ENCODE measurements at regions of chr1 and their contacts with region 1.

Region 1: GRCh38 chr1:61561666-61562065 is 163.3 kb downstream of the TM2D1 start:
- DNase-seq: no peak
- ATAC-seq: no peak
- H3K4me3 ChIP-seq: no peak overlapping the region
- H3K27ac ChIP-seq: no peak overlapping the region
- H3K4me1 ChIP-seq: no peaks in the 10 kb centered on the region
- H3K27me3 ChIP-seq: no peaks in the 10 kb centered on the region
- CTCF ChIP-seq: no peak

Region 2: DNA sequence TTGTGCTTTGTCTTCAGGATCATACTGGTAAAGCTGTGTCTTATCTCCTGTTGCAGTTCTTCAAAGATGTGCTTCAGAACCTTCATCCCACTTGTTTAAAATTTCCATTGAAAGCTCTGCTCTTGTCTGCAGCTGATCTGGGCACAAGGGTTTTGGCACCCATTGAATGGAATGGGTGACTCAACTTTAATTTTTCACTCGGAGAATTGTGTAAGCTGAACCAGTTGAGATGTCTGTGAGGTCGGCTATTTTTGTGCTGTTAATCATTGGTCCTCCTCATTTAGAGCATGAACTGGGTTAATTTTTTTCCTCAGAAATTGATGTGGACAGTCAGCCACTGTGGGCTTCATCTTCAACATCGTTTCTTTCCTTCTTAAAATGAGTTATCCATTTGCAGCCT is 88.8 kb before region 1 on chr1:
- intact Hi-C with region 1: loop called in 1 of 10 experiments (anchors 10 kb)
- DNase-seq: no peak
- ATAC-seq: no peak
- H3K4me3 ChIP-seq: no peak overlapping the region
- H3K27ac ChIP-seq: no peak overlapping the region
- H3K4me1 ChIP-seq: no peaks in the 10 kb centered on the region
- H3K27me3 ChIP-seq: no peaks in the 10 kb centered on the region
- CTCF ChIP-seq: no peak

Region 3: DNA sequence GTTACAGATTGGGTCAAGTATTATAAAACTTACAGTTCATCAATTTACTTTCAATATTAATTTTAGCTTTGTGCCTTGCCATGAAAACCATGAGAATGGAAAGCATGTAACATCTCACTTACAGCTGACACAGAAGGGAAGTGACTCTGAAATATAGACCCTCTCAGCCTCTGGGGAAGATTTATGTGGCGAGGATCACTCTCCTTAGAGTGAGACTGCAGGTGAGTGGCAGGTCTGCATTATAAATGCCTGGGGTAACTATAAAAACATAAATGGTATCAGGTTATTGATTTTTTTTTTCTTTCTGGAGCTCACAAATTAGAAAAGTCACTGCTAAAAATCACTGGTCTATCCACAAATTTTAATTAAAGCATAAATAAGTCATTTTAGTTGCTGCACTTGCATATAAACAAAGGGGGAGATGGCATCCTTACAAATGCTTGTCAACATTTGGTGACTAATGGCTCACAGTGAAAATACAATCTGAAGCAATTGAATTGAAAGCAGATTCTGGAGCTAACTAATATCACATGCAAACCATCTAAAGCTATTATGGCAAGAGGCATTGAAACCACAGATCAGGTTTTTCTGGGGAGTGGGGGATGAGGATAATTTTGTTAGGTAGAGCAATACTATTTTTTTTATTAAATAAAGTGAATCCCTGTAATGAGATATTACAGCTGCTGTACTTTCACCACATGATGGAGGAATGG is 37.6 kb before region 1 on chr1:
- intact Hi-C with region 1: no loop called
- DNase-seq: no peak
- ATAC-seq: no peak
- H3K4me3 ChIP-seq: no peak overlapping the region
- H3K27ac ChIP-seq: no peak overlapping the region
- H3K4me1 ChIP-seq: peaks cover 0 to 18% (median 7%) of the 10 kb centered on the region in 9 donors
- H3K27me3 ChIP-seq: no peaks in the 10 kb centered on the region
- CTCF ChIP-seq: no peak

Measured in heart right ventricle (tissue), 16 donors.